Right ventricle myocardium inferior (tissue), 1 donor: ENCODE measurements at regions of chr1 and their contacts with region 1.

Region 1: GRCh38 chr1:44405041-44405797 is at the start of gene RNF220:
- DNase-seq: peak; percentile 75
- ATAC-seq: peak; percentile 80
- total RNA-seq, gene RNF220: 76.4 TPM

Region 2: DNA sequence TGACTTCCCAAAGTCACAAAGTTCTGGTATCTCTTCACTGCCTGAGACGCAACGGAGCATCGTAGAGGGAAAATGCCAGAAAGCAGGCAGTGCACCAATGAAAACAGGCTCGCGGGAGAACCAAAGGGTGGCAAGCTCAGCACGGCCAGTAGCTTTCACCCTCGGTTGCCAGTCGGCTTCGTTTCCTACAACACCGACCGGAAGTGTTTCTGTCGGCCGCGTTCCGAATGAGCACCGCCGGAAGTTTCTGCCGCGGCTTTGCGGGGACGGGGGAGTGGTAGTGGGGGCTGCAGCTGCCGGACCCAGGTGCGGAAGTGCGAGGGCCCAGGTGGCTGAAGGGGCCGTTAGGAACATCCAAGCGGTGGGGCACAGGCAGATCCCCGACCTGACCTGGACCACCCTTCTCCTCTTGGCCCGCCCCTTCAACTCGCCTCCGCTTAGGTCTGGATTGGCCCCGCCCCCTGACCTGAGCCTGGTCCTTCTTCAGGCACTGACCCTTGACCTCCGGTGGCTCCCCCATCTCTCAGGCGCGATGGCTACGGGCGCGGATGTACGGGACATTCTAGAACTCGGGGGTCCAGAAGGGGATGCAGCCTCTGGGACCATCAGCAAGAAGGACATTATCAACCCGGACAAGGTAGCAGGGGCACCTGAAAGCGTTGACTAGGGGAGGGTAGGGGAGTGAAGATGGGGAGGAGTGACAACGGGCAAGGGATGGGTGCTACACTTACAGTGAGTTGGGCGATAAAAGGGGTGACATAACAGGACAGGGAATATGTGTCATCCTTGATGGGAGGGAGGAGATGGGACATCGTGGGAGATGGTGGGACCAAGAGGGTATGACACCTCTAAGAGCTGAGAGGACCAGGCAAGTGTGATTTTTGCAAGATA is 191.8 kb before region 1 on chr1 and contains the start of gene DMAP1:
- intact Hi-C with region 1: no loop called
- DNase-seq: peak; percentile 92
- ATAC-seq: peak; percentile 91
- total RNA-seq, gene DMAP1: 27.5 TPM

Region 3: DNA sequence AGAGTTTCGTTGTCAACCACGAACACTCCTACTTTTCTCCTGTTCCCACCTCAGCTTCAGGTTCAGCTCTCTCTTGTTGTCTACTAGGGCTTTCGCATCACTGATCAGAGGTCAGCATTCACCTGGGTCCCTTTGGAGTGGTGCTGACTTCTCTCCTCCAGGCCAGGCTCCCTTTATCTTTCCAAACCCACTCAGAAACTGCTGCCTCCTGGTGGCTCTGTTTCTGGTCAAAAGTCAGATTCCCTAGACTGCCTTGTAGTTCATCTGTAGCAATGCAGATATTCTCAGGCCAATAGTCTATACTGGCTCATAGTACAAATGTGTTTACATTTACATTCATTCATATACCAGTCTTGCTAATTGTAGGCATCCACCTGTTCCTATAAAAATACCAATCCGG is 43.7 kb before region 1 on chr1:
- intact Hi-C with region 1: no loop called
- DNase-seq: no peak
- ATAC-seq: no peak

Region 4: GRCh38 chr1:44484155-44484688 is 79.0 kb after region 1 on chr1:
- intact Hi-C with region 1: loop called (anchors 5 kb)
- DNase-seq: no peak
- ATAC-seq: peak; percentile 18